Cardiac septum (tissue), 1 donor: ENCODE measurements at regions of chr5 and their contacts with region 1.

Region 1: GRCh38 chr5:33423018-33423630 is 17.6 kb upstream of the TARS1 start:
- DNase-seq: no peak

Region 2: GRCh38 chr5:32489791-32490582 is 933.1 kb before region 1 on chr5:
- intact Hi-C with region 1: loop called (anchors 10 kb)
- DNase-seq: peak; percentile 84

Region 3: GRCh38 chr5:33180900-33181299 is 242.2 kb before region 1 on chr5:
- intact Hi-C with region 1: loop called (anchors 10 kb)
- DNase-seq: no peak

Region 4: GRCh38 chr5:33494466-33494865 is 71.3 kb after region 1 on chr5:
- intact Hi-C with region 1: no loop called
- DNase-seq: no peak